ENCODE measurements at regions of chr7 and their contacts with region 1.

Region 1: GRCh38 chr7:5396999-5397663 is 26.5 kb downstream of the TNRC18 start:
- DNase-seq: peak; percentile 21
- H3K4me3 ChIP-seq: no peak overlapping the region
- H3K27ac ChIP-seq: no peak overlapping the region
- H3K4me1 ChIP-seq: no peaks in the 10 kb centered on the region
- H3K27me3 ChIP-seq: no peaks in the 10 kb centered on the region
- CTCF ChIP-seq: no peak
- POLR2A ChIP-seq: no peak

Region 2: DNA sequence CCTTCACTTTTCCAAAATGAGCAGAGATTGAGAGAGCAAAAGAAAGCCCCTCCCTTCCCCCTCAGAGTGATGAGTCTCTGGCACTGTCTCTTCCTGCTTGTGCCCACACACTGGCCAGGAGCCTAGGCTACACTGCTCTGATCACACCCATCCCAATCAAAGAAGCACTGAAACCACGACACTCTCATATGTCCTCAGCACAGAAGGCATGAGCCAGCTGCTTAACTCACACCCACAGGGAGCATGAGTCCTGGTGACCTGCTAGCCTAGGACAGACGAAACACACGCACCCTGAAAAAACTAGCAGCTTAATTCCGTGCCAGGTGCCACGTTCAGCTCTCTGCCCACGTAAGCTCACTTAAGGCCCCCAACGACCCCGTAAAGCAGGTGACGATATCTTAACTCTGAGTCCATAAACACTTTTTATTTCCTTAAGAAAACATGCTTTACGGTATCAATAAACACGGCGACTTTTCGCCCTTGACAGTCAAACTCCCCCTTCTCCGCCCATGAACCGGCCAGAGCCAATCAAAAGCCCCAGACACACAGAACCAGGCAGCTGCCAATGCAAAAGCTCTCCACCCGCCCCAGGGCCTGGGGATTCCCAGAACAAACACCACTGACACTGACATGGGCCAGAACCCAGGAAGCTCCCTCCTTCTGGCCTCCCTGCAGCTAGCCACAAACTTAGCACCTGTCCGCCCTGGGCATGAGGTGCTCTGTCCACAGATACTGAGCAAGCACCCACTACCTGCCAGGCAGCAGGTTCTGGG is 42.5 kb before region 1 on chr7:
- CTCF ChIA-PET with region 1: no interaction called
- POLR2A ChIA-PET with region 1: no interaction called
- dilution Hi-C with region 1: no loop called
- intact Hi-C with region 1: no loop called
- DNase-seq: no peak
- H3K4me3 ChIP-seq: no peak overlapping the region
- H3K27ac ChIP-seq: no peak overlapping the region
- H3K4me1 ChIP-seq: no peaks in the 10 kb centered on the region
- H3K27me3 ChIP-seq: no peaks in the 10 kb centered on the region
- CTCF ChIP-seq: no peak
- POLR2A ChIP-seq: no peak

Region 3: DNA sequence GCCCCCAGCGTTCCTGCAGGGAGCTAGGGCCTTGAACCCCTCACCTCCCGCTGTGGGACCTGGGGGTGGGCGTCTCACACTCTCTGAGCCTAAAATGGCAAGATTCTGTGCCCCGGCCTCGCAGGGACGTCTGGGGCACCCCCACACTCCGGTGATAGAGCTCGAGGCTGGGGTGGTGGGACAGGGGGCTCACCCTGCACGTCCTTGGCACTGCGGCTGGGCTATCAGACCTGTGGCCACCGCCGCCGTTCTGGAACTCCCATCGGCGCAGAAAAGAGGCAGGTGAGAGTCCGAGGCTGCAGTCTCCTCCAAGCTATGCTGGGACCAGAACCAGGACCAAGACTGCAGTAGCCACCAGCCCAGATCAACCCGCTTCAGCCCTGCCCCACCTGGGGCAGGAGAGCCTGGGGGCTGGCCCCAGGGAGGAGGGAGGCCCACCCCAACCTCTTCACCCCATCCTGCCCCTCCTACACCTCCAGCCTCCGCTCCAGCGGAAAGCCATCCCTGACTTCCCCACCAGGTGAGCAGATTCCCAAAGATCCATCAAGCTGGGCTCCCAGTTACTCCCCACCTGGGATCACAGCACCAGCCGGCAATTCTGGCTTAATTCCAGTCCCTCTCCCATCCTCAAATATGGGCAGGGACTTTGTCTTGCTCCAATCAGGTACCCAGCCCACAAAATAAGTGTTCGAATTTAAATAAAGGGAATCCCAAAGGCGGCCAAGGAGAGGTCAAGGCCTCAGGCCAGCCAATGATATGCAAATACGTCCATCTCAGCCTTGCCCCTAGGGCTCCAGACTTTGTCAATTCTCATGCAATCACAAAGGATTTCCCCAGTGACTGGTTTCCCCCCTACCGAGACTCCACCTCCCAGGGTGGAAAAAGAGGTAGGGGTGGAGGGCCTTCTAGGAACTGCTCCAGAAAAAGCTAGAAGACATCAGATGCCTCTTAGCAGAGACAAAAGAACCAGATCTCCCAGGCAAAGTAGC is 10.1 kb after region 1 on chr7:
- CTCF ChIA-PET with region 1: interaction called, 14 read pairs
- POLR2A ChIA-PET with region 1: interaction called, 4 read pairs
- dilution Hi-C with region 1: no loop called
- intact Hi-C with region 1: no loop called
- DNase-seq: no peak
- H3K4me3 ChIP-seq: no peak overlapping the region
- H3K27ac ChIP-seq: no peak overlapping the region
- H3K4me1 ChIP-seq: peaks cover 8% of the 10 kb centered on the region
- H3K27me3 ChIP-seq: no peaks in the 10 kb centered on the region
- CTCF ChIP-seq: no peak
- POLR2A ChIP-seq: no peak